Calu3 (cell line): ENCODE measurements at regions of chr1 and their contacts with region 1.

Region 1: DNA sequence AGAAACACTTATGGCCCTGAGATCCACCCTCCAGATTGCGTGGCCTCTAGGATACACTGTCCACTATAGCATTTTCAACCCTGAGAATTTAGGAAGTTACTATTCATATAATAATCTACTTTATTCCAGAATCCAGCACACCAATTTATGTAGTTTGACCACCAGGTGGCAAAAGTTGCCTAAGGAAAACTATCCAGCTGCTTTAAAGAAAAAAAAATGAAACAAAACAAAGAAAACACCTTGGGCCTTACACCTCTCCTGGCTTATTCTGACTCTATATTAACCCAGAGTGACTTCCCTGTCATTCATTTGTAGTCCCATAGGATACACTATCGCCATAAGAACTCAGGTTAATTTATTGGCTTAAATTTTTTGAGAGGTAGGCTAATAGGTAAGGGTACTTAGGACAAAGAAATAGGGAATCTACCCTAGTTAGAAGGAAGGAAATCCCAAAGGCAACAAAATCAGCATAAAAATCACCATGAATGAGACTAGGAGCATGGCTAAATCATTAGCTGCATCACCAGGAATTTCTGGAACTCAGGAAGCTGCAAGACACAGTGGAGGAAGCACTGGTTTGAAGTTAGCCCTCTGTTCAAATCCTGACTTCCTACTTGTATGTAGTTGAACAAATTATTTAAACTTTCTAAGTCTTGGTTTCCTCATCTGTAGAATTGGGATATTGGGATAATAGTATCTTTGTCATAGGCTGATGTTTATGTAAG is 107.5 kb downstream of the SPAG17 start:
- DNase-seq: peak; percentile 24
- H3K4me3 Mint-ChIP-seq: no peak overlapping the region
- H3K27ac Mint-ChIP-seq: no peak overlapping the region
- H3K4me1 Mint-ChIP-seq: peaks cover 5% of the 10 kb centered on the region
- H3K27me3 Mint-ChIP-seq: no peaks in the 10 kb centered on the region
- CTCF ChIP-seq: no peak

Region 2: GRCh38 chr1:117838911-117839310 is 238.6 kb before region 1 on chr1:
- CTCF ChIA-PET with region 1: no interaction called
- intact Hi-C with region 1: no loop called
- DNase-seq: no peak
- H3K4me3 Mint-ChIP-seq: no peak overlapping the region
- H3K27ac Mint-ChIP-seq: no peak overlapping the region
- H3K4me1 Mint-ChIP-seq: peaks cover 7% of the 10 kb centered on the region
- H3K27me3 Mint-ChIP-seq: no peaks in the 10 kb centered on the region
- CTCF ChIP-seq: no peak

Region 3: DNA sequence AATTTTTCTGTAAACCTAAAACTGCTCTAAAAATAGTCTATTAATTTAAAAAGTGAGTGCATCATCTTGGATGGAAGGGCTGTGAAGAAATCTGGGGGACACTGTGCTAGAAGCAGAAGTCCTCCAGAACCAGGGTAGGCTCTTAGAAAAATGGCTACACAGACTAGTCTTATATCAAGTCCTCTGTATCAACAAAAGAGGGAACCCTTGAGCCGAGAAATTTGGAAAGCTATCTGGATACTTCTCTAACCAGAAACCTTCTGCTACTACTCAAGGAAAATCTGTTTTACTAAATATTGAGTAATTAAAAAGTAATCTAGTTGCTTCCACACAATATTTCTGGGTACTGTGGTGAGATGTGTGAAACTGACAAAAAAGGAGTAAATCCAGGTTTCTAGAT is 55.8 kb before region 1 on chr1:
- CTCF ChIA-PET with region 1: no interaction called
- intact Hi-C with region 1: no loop called
- DNase-seq: no peak
- H3K4me3 Mint-ChIP-seq: no peak overlapping the region
- H3K27ac Mint-ChIP-seq: no peak overlapping the region
- H3K4me1 Mint-ChIP-seq: no peaks in the 10 kb centered on the region
- H3K27me3 Mint-ChIP-seq: no peaks in the 10 kb centered on the region
- CTCF ChIP-seq: no peak

Region 4: GRCh38 chr1:118113261-118113660 is 35.8 kb after region 1 on chr1:
- CTCF ChIA-PET with region 1: no interaction called
- intact Hi-C with region 1: loop called (anchors 5 kb)
- DNase-seq: no peak
- H3K4me3 Mint-ChIP-seq: no peak overlapping the region
- H3K27ac Mint-ChIP-seq: no peak overlapping the region
- H3K4me1 Mint-ChIP-seq: peaks cover 30% of the 10 kb centered on the region
- H3K27me3 Mint-ChIP-seq: no peaks in the 10 kb centered on the region
- CTCF ChIP-seq: no peak

Region 5: GRCh38 chr1:118151312-118151937 is 73.9 kb after region 1 on chr1:
- CTCF ChIA-PET with region 1: no interaction called
- intact Hi-C with region 1: loop called (anchors 1 kb)
- DNase-seq: peak; percentile 37
- H3K4me3 Mint-ChIP-seq: no peak overlapping the region
- H3K27ac Mint-ChIP-seq: no peak overlapping the region
- H3K4me1 Mint-ChIP-seq: no peaks in the 10 kb centered on the region
- H3K27me3 Mint-ChIP-seq: no peaks in the 10 kb centered on the region
- CTCF ChIP-seq: peak; percentile 40

Region 6: GRCh38 chr1:118247593-118247992 is 170.1 kb after region 1 on chr1:
- CTCF ChIA-PET with region 1: no interaction called
- intact Hi-C with region 1: loop called (anchors 5 kb)
- DNase-seq: no peak
- H3K4me3 Mint-ChIP-seq: no peak overlapping the region
- H3K27ac Mint-ChIP-seq: no peak overlapping the region
- H3K4me1 Mint-ChIP-seq: no peaks in the 10 kb centered on the region
- H3K27me3 Mint-ChIP-seq: peaks cover 11% of the 10 kb centered on the region
- CTCF ChIP-seq: no peak

Region 7: DNA sequence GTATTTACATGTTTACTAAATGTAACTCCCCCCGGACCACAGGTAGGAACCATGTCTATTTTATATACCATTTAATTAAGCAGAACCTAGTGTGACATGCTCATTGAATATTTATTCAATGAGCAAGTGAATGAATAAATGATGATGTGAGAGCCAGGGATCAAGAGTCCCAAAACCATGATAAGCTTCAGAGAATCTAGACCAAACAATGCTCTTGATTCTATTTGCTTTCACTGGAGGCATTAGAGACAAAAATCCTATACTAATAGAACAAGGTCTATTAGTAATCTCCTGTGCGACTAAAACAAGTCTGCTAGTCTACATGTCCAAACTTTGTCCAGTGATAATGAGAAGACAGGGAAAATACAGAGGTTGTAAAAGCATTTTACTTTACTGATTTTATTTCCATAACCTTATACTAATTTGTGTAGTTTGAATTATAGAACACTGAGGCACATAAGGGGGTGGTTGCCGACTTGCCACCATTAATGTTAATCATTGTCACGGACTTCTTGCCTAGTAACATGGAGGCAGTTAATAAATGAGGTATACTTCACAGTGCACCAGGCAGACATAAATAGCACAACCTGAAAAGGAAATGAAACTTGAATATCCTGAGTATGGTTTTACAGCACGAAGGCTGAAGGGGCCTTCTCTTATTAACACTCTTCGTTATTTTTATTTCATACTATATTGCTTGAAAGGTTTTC is 840.9 kb after region 1 on chr1:
- CTCF ChIA-PET with region 1: no interaction called
- intact Hi-C with region 1: loop called (anchors 10 kb)
- DNase-seq: no peak
- H3K4me3 Mint-ChIP-seq: no peak overlapping the region
- H3K27ac Mint-ChIP-seq: no peak overlapping the region
- H3K4me1 Mint-ChIP-seq: peaks cover 18% of the 10 kb centered on the region
- H3K27me3 Mint-ChIP-seq: peaks cover 17% of the 10 kb centered on the region
- CTCF ChIP-seq: no peak

Region 8: GRCh38 chr1:119008483-119009311 is 931.2 kb after region 1 on chr1:
- CTCF ChIA-PET with region 1: no interaction called
- intact Hi-C with region 1: loop called (anchors 5 kb)
- DNase-seq: peak; percentile 58
- H3K4me3 Mint-ChIP-seq: peak overlapping the region; percentile 70
- H3K27ac Mint-ChIP-seq: peak overlapping the region; percentile 72
- H3K4me1 Mint-ChIP-seq: peaks cover 28% of the 10 kb centered on the region
- H3K27me3 Mint-ChIP-seq: peaks cover 35% of the 10 kb centered on the region
- CTCF ChIP-seq: no peak

Region 9: DNA sequence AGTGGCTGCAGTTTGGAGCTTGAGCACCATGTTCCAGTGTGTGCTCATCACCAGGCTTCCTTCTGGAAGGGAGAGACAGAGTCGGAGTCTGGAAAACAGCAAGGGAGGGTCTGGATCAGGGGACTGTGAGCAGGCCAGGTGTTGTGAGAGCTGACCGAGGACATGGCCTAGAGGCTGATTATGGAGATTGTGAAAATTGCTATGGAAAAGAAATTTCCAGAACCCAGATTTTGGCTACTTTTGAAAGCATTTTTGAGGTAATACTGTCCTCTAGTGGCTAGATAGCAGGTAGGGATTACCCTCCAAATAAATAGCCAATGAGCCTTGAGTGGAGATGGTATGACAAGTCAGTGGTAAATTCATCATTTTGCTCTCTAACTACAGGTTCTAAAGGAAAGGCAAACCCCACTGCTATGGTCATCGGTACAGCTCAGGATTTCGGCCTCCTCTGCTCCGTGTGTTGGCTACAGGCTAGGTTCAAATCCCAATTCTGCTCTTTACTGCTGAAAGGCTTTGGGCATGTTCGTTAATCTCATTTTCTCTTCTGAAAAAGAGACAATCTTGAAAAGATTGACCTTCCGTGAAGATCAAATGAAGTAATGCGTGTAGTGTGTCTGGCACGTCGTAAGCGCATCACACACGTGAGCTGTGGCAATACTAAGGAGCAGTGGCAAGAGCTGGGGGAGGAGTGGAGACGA is 1290.1 kb after region 1 on chr1:
- CTCF ChIA-PET with region 1: no interaction called
- intact Hi-C with region 1: loop called (anchors 5 kb)
- DNase-seq: no peak
- H3K4me3 Mint-ChIP-seq: no peak overlapping the region
- H3K27ac Mint-ChIP-seq: no peak overlapping the region
- H3K4me1 Mint-ChIP-seq: no peaks in the 10 kb centered on the region
- H3K27me3 Mint-ChIP-seq: peaks cover 43% of the 10 kb centered on the region
- CTCF ChIP-seq: peak; percentile 63